ENCODE measurements at regions of chr12 and their contacts with region 1.

Region 1: GRCh38 chr12:614411-614970 is 48.8 kb downstream of the NINJ2 start:
- DNase-seq: peak; percentile 53
- H3K4me3 Mint-ChIP-seq: no peak overlapping the region
- H3K27ac Mint-ChIP-seq: no peak overlapping the region
- H3K4me1 Mint-ChIP-seq: peaks cover 51% of the 10 kb centered on the region
- H3K27me3 Mint-ChIP-seq: peaks cover 15% of the 10 kb centered on the region

Region 2: DNA sequence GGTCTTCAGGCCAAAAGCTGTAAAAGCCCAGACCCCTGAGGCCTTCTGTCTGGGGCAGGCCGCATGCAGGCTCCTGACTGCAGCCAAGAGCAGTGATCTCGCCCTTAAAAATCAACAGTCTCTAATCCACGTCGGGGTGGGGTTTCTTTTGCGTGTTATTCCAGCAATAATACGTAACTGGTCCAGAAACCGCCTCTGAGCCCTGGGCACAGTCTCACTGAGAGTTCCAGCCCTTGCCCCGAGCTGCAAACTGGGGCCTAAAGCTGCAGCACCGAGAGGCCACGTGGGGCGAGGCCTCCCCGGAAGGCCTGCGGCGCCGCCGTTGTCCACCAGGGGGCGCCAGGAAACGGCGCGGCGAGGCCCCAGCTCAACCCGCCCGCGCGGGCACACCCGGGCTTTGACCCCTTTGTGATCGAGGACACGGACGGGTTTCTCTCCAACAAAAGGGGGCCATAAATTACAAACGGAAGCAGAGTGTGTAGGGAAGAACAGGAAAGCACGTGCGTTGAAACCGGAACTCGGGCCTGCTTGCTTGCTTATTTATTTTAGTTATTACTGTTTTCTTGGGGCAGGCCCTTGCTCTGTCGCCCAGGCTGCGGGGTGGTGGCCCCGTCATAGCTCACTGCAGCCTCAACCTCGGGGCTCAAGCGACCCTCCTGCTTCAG is 38.4 kb before region 1 on chr12:
- CTCF ChIA-PET with region 1: interaction called, 17 read pairs
- DNase-seq: peak; percentile 82
- H3K4me3 Mint-ChIP-seq: peak overlapping the region; percentile 24
- H3K27ac Mint-ChIP-seq: peak overlapping the region; percentile 29
- H3K4me1 Mint-ChIP-seq: peaks cover 45% of the 10 kb centered on the region
- H3K27me3 Mint-ChIP-seq: peaks cover 15% of the 10 kb centered on the region

Region 3: DNA sequence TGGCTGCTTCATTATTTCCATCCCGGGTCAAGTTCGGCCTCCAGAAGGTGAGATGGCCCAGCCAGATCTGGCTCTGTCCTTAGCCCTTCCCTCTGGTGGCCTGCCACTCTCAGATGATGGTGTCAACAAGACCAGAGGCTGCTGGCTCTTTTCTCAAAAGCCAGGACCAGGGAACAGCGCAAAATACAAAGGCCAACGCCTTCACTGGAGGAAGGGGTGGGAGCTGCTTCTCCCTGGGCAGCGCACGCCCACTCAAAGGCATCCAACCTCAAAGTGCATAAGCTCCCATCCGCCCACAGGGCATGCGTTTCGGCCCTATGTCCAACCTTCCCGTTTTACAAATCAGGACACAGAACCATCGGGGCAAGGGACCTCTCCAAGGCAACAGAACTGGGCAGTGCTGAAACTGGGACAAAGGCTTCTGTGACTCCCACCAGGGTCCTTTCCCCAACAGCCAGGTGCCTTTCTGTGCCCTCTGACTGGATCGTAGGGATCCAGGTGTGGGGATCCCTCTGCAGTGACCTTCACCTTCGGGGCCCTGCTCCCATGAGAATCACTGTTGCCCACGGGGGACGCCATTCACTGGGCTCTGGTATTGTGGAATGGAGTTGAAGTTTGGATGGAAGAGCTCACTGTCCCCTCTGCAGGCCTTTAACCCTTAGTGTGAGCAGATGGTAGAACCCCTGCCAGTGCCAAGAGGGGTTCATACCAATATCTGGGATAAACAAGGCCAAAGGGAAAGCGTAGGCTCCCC is 28.0 kb before region 1 on chr12:
- CTCF ChIA-PET with region 1: no interaction called
- DNase-seq: no peak
- H3K4me3 Mint-ChIP-seq: no peak overlapping the region
- H3K27ac Mint-ChIP-seq: no peak overlapping the region
- H3K4me1 Mint-ChIP-seq: no peaks in the 10 kb centered on the region
- H3K27me3 Mint-ChIP-seq: peaks cover 17% of the 10 kb centered on the region